HepG2 (cell line): ENCODE measurements at regions of chr18 and their contacts with region 1.

Region 1: DNA sequence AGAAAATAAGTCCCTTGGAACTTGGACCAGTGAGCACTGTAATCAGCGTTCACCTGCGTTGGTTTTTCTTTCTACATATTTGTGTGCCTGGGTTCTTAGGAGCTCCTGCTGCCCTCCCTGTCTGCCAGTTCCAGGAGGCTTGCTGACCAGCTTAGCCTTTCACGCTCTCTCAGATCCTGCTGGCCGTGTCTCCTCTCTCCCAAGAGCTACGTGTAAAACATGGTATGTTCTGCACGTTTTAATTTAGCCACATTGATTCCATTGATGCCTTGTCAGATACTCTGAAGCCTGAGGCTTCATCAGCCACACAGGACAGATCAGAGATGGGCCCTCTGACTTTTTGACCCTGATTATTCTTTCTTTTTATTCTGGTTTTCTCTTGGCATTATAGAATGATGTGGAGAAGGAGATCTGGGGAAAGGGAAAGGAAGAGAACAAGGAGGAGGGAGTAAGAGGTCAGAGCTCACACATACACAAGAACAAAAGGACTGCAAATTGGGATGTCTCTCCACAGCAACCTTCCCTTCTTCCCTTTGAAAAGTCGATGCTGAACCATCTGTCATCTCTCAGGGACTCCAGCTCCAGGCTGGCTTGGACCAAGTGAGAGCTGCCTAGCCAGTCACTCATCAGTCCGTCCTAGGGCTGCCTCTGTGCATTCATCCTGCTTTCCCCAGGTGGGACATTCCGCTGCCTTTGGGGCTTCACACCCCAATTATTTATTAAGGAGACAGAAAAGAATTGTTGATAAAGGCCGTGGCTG is 152.8 kb downstream of the PIK3C3 start:
- DNase-seq: no peak
- ATAC-seq: no peak
- H3K4me3 ChIP-seq: no peak overlapping the region
- H3K27ac ChIP-seq: no peak overlapping the region
- H3K4me1 ChIP-seq: peaks cover 11% of the 10 kb centered on the region
- H3K27me3 ChIP-seq: no peaks in the 10 kb centered on the region; a peak in 1 of 5 replicates
- CTCF ChIP-seq: no peak
- EP300 ChIP-seq: no peak
- POLR2A ChIP-seq: no peak
- RAD21 ChIP-seq: no peak

Region 2: GRCh38 chr18:42064109-42064508 is 43.8 kb before region 1 on chr18:
- CTCF ChIA-PET with region 1: no interaction called
- POLR2A ChIA-PET with region 1: no interaction called
- in situ Hi-C with region 1: no loop called
- intact Hi-C with region 1: no loop called
- DNase-seq: no peak
- ATAC-seq: no peak
- H3K4me3 ChIP-seq: no peak overlapping the region
- H3K27ac ChIP-seq: no peak overlapping the region
- H3K4me1 ChIP-seq: no peaks in the 10 kb centered on the region
- H3K27me3 ChIP-seq: no peaks in the 10 kb centered on the region
- CTCF ChIP-seq: no peak
- EP300 ChIP-seq: no peak
- POLR2A ChIP-seq: no peak
- RAD21 ChIP-seq: no peak

Region 3: DNA sequence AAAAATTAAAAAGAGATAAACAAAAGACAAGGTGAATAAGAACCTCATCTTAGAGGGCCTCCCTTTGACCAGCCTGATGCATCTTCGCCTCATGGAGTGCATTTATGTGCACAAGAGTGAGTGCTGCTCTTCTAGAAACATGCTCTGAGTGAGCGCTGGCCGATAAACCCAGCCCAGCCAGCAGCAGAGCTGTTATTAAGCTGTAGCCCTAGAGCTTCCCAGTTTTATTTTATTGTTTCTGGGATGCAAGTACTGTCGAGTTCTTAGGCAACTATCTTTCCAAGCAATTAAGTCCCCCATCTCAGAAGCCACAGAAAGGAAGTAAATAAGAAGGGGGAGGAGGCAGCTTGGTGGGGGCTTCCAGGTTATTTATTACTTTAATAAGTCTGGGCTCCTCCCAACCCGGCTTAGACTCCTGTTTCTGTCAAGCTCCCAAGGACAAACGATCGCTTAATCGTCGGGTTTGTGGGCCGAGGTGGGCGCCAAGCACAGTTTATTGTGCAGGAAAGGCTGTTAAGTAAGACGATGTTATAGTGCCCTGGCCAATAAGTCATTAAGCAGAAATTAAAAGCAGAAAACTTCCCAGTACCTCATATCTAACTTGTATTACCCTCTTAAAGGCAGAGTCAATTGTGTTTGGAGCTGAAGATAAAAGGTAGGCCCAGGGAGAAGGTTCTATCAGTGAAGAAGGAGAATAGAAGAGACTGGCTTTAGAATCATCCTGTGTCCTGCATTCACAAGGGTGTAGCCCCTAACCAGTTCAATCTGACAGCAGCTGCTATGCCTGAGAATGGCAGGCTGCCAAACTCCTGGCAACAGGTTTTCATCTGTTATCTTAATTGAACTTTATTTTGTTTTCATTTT is 23.4 kb after region 1 on chr18:
- CTCF ChIA-PET with region 1: no interaction called
- POLR2A ChIA-PET with region 1: no interaction called
- in situ Hi-C with region 1: no loop called
- intact Hi-C with region 1: loop called (anchors 1 kb)
- DNase-seq: no peak
- ATAC-seq: no peak
- H3K4me3 ChIP-seq: peak overlapping the region in 1 of 3 experiments; percentile 2; a peak in 1 of 6 replicates
- H3K27ac ChIP-seq: no peak overlapping the region
- H3K4me1 ChIP-seq: no peaks in the 10 kb centered on the region
- H3K27me3 ChIP-seq: no peaks in the 10 kb centered on the region
- CTCF ChIP-seq: no peak
- EP300 ChIP-seq: no peak
- POLR2A ChIP-seq: no peak
- RAD21 ChIP-seq: no peak